K562 (cell line): ENCODE measurements at regions of chr13 and their contacts with region 1.

Region 1: GRCh38 chr13:67230404-67231288 is 510 bp upstream of the PCDH9 start:
- DNase-seq: peak; percentile 88 to 93 (median 90)
- ATAC-seq: peak; percentile 98
- H3K4me3 ChIP-seq: peak overlapping the region; percentile 75
- H3K27ac ChIP-seq: peak overlapping the region; percentile 65; the same call in 1 of the 3 replicates
- H3K4me1 ChIP-seq: peaks cover 2 to 13% of the 10 kb centered on the region in 2 experiments; a peak in 3 of 5 replicates
- H3K27me3 ChIP-seq: no peaks in the 10 kb centered on the region
- CTCF ChIP-seq: no peak
- EP300 ChIP-seq: no peak
- POLR2A ChIP-seq: peak; percentile 61
- RAD21 ChIP-seq: no peak

Region 2: DNA sequence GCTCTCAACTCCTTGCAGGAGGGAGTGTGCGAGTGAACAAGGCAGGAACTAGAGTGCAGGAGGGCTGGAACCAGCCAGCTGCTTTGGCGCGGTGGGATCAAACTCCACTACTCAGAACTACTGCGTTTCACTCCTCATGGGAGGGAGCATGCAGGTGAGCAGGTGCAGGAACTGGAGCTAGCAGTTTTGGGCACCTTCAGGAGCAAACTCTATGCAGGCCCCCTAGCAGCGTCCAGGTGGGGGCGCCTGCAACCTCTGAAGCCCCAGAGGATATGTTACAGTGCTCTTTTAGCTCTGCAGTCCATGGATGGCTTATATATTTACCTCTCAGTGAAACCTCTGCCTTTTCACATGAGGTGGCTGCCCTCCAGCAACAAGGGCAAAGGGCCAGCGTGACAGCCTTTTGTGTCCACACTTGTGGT is 1303.9 kb before region 1 on chr13:
- CTCF ChIA-PET with region 1: no interaction called
- POLR2A ChIA-PET with region 1: no interaction called
- in situ Hi-C with region 1: no loop called
- intact Hi-C with region 1: loop called (anchors 10 kb)
- DNase-seq: peak in 2 of 4 experiments; percentile 3 to 33
- ATAC-seq: peak; percentile 84
- H3K4me3 ChIP-seq: no peak overlapping the region
- H3K27ac ChIP-seq: no peak overlapping the region
- H3K4me1 ChIP-seq: no peaks in the 10 kb centered on the region
- H3K27me3 ChIP-seq: no peaks in the 10 kb centered on the region
- CTCF ChIP-seq: peak; percentile 24 to 35 (median 26); a peak in 2 of 6 replicates
- EP300 ChIP-seq: no peak
- POLR2A ChIP-seq: no peak
- RAD21 ChIP-seq: peak in 1 of 2 experiments; percentile 56; a peak in 2 of 4 replicates

Region 3: GRCh38 chr13:69109891-69110525 is 1879.4 kb after region 1 on chr13:
- CTCF ChIA-PET with region 1: no interaction called
- POLR2A ChIA-PET with region 1: no interaction called
- in situ Hi-C with region 1: no loop called
- intact Hi-C with region 1: no loop called
- DNase-seq: no peak
- ATAC-seq: no peak
- H3K4me3 ChIP-seq: no peak overlapping the region
- H3K27ac ChIP-seq: no peak overlapping the region
- H3K4me1 ChIP-seq: no peaks in the 10 kb centered on the region
- H3K27me3 ChIP-seq: no peaks in the 10 kb centered on the region
- CTCF ChIP-seq: no peak
- EP300 ChIP-seq: no peak
- POLR2A ChIP-seq: no peak
- RAD21 ChIP-seq: no peak